Gastrocnemius medialis (tissue), 4 donors: ENCODE measurements at regions of chr9 and their contacts with region 1.

Region 1: DNA sequence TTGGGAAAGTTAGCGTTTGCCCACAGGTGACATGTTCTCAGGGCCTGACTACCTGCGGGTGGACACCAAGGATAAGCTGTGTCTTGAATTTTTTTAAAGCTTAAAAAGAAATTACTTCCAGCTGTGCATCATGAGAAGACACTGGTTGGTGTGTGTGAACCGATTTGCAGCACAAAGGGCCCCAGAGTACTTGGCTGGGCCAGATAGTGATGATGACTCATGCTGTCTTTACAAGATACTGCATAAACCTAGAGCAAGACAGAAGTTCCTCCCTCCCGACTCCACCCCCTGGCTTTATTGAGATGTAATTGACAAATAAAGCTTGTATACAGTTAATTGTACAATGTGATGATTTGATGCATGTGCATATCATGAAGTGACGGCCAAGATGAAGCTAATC is 212.8 kb downstream of the NXNL2 start:
- DNase-seq: peak in 1 of 2 donors; percentile 45
- ATAC-seq: peak; percentile 63 to 73
- H3K4me3 ChIP-seq: no peak overlapping the region
- H3K27ac ChIP-seq: peak overlapping the region in 3 of 4 donors; percentile 45 to 68 (median 48)
- H3K4me1 ChIP-seq: peaks cover 0 to 13% of the 10 kb centered on the region in 2 donors
- H3K27me3 ChIP-seq: no peaks in the 10 kb centered on the region
- CTCF ChIP-seq: no peak
- POLR2A ChIP-seq: no peak

Region 2: DNA sequence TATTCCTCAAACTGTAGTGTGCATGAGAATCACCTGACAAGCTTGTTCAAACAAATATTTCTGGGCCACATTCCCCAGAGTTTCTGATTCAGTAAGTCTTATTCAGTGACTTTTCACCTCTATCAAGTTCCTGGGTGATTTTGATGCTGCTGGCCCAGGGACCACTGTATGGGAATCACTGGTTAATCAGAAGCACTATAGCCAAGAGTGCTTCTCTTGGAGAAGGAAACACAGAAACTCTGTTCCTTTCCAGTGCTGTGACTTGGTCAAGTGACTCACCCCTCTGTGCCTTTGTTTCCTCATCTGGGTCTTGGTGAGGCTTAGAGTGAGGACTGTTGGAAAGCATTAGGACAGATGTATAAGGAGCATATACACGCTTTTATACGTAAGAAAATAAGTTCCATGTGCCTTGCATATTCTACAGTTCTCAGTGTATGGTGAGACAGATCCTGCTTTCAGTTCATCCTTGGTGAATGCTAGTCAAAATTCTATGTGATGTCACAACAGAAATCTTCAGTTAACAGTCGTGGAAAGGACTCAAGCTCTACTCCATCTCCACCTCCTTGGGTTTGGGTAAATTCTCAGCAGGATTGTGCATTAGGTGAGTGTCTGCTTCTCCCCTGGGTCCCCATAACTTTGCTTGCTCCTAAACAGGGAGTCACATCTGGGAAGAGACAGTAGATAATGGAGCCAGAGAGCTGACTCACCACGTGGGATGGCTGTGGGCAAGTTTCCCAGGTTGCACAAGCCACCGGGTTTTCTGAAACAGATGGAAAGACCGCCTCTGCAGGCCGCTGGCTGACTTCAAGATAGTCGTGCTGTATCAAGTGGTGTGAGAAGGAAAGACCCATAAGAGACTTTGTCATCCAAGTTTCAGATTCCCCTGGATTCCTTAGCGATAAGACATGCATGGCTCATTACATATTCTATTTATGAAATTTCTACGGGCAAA is 95.8 kb before region 1 on chr9:
- in situ Hi-C with region 1: no loop called
- intact Hi-C with region 1: loop called (anchors 2 kb)
- DNase-seq: peak; percentile 62 to 73
- ATAC-seq: peak; percentile 90
- H3K4me3 ChIP-seq: no peak overlapping the region
- H3K27ac ChIP-seq: no peak overlapping the region
- H3K4me1 ChIP-seq: no peaks in the 10 kb centered on the region
- H3K27me3 ChIP-seq: no peaks in the 10 kb centered on the region
- CTCF ChIP-seq: no peak
- POLR2A ChIP-seq: no peak

Region 3: GRCh38 chr9:88991066-88992034 is 243.6 kb after region 1 on chr9 and contains the start of gene S1PR3:
- in situ Hi-C with region 1: loop called in 1 of 4 experiments (anchors 25 kb)
- intact Hi-C with region 1: loop called (anchors 10 kb)
- DNase-seq: peak in 1 of 2 donors; percentile 23
- ATAC-seq: peak; percentile 39 to 52
- H3K4me3 ChIP-seq: peak within 1 kb of the TSS; percentile 49 to 63 (median 52)
- H3K27ac ChIP-seq: peak within 1 kb of the TSS; percentile 51 to 65 (median 62)
- H3K4me1 ChIP-seq: no peaks in the 10 kb centered on the region
- H3K27me3 ChIP-seq: peaks cover 14 to 22% (median 19%) of the 10 kb centered on the region in 3 donors
- CTCF ChIP-seq: no peak
- POLR2A ChIP-seq: peak in 1 of 2 donors; percentile 52
- total RNA-seq, gene S1PR3: 3.3 to 13.4 (median 5.7) TPM